HEK293T (cell line): ENCODE measurements at regions of chr1 and their contacts with region 1.

Region 1: DNA sequence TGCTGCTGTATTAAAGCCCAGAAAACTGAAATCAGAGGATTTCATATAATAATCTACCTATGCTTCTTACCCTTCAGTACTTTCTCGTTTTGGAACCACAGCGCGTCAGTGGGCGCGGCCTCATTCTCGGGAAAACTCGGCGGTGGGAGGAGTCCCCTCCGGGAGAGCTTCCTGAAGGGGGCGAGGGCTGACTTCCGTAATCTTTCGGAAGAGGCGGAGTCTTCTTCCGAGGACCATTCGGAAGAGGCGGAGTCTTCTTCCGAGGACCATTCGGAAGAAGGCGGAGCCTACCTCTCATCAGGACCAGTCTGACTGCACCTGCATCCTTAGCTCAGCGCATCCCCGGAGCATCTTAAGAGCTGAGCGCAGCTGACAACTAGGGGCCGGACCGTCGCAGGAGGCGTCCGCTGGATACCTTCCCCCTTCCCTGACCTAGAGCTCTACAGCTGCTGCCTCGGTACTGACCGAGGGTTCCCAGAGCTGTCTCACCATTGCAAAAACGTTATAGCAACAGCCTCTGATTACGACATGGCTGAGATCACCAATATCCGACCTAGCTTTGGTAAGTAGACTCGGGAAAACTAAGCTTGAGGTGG is at the start of gene SYT11:
- DNase-seq: peak; percentile 99

Region 2: DNA sequence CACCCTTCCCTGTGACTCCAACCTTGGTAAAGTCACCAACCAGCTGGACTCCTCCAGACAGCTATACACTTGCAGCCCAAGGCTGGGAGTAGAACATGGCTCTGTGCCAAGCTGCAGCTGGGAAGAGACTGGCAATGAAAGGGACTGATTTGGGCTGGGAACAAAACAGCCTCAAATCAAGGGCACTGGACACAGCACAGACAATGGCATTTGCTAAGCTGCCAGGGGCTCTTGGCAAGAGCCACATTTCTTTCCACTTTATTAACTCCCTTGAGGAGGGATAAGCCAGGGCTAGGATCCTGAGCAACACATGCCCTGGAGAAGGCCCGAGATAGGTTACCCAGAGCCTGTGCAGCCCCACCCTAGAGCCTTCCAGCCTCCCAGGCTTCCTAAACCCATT is 12.1 kb after region 1 on chr1:
- CTCF ChIA-PET with region 1: interaction called, 3 read pairs
- POLR2A ChIA-PET with region 1: interaction called, 12 read pairs
- DNase-seq: no peak